ENCODE measurements at regions of chr1 and their contacts with region 1.

Region 1: GRCh38 chr1:40257688-40258444 is at the start of gene ZMPSTE24:
- DNase-seq: peak; percentile 98
- ATAC-seq: peak; percentile 94
- H3K4me3 ChIP-seq: peak within 1 kb of the TSS; percentile 80 to 98 (median 96)
- H3K4me3 Mint-ChIP-seq: peak within 1 kb of the TSS; percentile 97
- H3K27ac ChIP-seq: peak within 1 kb of the TSS; percentile 99
- H3K27ac Mint-ChIP-seq: peak within 1 kb of the TSS; percentile 99
- H3K4me1 ChIP-seq: peaks cover 9 to 10% of the 10 kb centered on the region in 2 donors
- H3K4me1 Mint-ChIP-seq: peaks cover 32% of the 10 kb centered on the region
- H3K27me3 ChIP-seq: no peaks in the 10 kb centered on the region
- H3K27me3 Mint-ChIP-seq: no peaks in the 10 kb centered on the region
- CTCF ChIP-seq: no peak
- total RNA-seq, gene ZMPSTE24: 14.0 and 18.5 TPM in 2 replicates

Region 2: GRCh38 chr1:40161125-40161887 is 96.6 kb before region 1 on chr1 and contains the start of gene RLF:
- CTCF ChIA-PET with region 1: no interaction called
- POLR2A ChIA-PET with region 1: no interaction called
- intact Hi-C with region 1: loop called (anchors 1 kb)
- DNase-seq: peak; percentile 96
- ATAC-seq: peak; percentile 97
- H3K4me3 ChIP-seq: peak within 1 kb of the TSS; percentile 93 to 97 (median 95)
- H3K4me3 Mint-ChIP-seq: peak within 1 kb of the TSS; percentile 38
- H3K27ac ChIP-seq: peak within 1 kb of the TSS; percentile 96 to 97
- H3K27ac Mint-ChIP-seq: no peak within 1 kb of the TSS
- H3K4me1 ChIP-seq: peaks cover 28 to 39% of the 10 kb centered on the region in 2 donors
- H3K4me1 Mint-ChIP-seq: peaks cover 22% of the 10 kb centered on the region
- H3K27me3 ChIP-seq: no peaks in the 10 kb centered on the region
- H3K27me3 Mint-ChIP-seq: no peaks in the 10 kb centered on the region
- CTCF ChIP-seq: no peak
- total RNA-seq, gene RLF: 21.4 and 21.9 TPM in 2 replicates

Region 3: DNA sequence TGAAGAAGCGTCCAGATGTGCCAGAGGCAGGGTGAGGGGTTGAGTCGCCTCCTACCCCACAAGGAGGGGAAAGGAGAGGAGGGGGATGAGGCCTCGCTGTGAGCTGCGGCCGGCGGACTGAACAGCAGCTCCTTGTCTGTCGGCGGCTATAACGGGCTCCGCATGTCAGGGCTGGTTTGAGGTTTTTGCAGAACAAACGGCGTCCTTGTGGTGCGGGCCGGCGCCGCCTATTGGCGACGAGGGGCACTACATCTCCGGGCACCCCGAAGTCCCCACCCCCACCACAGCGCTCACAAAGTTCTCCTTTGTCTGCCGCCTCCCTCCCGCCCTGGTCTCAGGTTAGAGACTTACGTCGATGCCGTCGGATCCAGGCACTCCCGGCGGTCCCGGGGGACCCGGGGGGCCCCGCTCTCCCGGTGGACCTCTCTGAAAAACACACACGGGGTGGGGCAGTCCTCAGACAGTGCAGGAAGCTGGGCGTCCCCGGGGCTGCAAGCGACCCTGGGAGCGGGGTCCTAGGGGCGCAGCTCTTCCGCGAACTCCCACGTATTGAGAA is 57.5 kb after region 1 on chr1:
- CTCF ChIA-PET with region 1: interaction called, 5 read pairs
- POLR2A ChIA-PET with region 1: interaction called, 11 read pairs
- intact Hi-C with region 1: loop called (anchors 1 kb)
- DNase-seq: peak; percentile 94
- ATAC-seq: peak; percentile 61
- H3K4me3 ChIP-seq: peak overlapping the region; percentile 43 to 78 (median 66)
- H3K4me3 Mint-ChIP-seq: peak overlapping the region; percentile 92
- H3K27ac ChIP-seq: peak overlapping the region in 1 of 2 donors; percentile 40
- H3K27ac Mint-ChIP-seq: peak overlapping the region; percentile 76
- H3K4me1 ChIP-seq: peaks cover 41 to 59% of the 10 kb centered on the region in 2 donors
- H3K4me1 Mint-ChIP-seq: peaks cover 57% of the 10 kb centered on the region
- H3K27me3 ChIP-seq: peaks cover 0 to 3% (median 1%) of the 10 kb centered on the region in 4 experiments
- H3K27me3 Mint-ChIP-seq: peaks cover 5% of the 10 kb centered on the region
- CTCF ChIP-seq: peak; percentile 95

Region 4: GRCh38 chr1:40449684-40450494 is 192.0 kb after region 1 on chr1 and contains the start of gene ZFP69B:
- CTCF ChIA-PET with region 1: no interaction called
- POLR2A ChIA-PET with region 1: no interaction called
- intact Hi-C with region 1: loop called (anchors 1 kb)
- DNase-seq: peak; percentile 92
- ATAC-seq: peak; percentile 81
- H3K4me3 ChIP-seq: peak within 1 kb of the TSS; percentile 62 to 79 (median 76)
- H3K4me3 Mint-ChIP-seq: peak within 1 kb of the TSS; percentile 96
- H3K27ac ChIP-seq: peak within 1 kb of the TSS in 1 of 2 donors; percentile 60
- H3K27ac Mint-ChIP-seq: peak within 1 kb of the TSS; percentile 93
- H3K4me1 ChIP-seq: peaks cover 14 to 17% of the 10 kb centered on the region in 2 donors
- H3K4me1 Mint-ChIP-seq: peaks cover 27% of the 10 kb centered on the region
- H3K27me3 ChIP-seq: no peaks in the 10 kb centered on the region
- H3K27me3 Mint-ChIP-seq: no peaks in the 10 kb centered on the region
- CTCF ChIP-seq: no peak
- total RNA-seq, gene ZFP69B: 10.8 and 11.8 TPM in 2 replicates

Region 5: GRCh38 chr1:40508375-40509341 is 250.8 kb after region 1 on chr1 and contains the start of gene EXO5:
- CTCF ChIA-PET with region 1: no interaction called
- POLR2A ChIA-PET with region 1: no interaction called
- intact Hi-C with region 1: no loop called
- DNase-seq: peak; percentile 83
- ATAC-seq: peak; percentile 98
- H3K4me3 ChIP-seq: peak within 1 kb of the TSS; percentile 68 to 94 (median 88)
- H3K4me3 Mint-ChIP-seq: peak within 1 kb of the TSS; percentile 93
- H3K27ac ChIP-seq: peak within 1 kb of the TSS; percentile 52 to 53
- H3K27ac Mint-ChIP-seq: peak within 1 kb of the TSS; percentile 85
- H3K4me1 ChIP-seq: peaks cover 6 to 16% of the 10 kb centered on the region in 2 donors
- H3K4me1 Mint-ChIP-seq: peaks cover 20% of the 10 kb centered on the region
- H3K27me3 ChIP-seq: no peaks in the 10 kb centered on the region
- H3K27me3 Mint-ChIP-seq: no peaks in the 10 kb centered on the region
- CTCF ChIP-seq: no peak
- total RNA-seq, gene EXO5: 13.9 and 16.9 TPM in 2 replicates

Measured in B cell (primary cell).